Activated CD4-positive, alpha-beta memory T cell treated with anti-CD3 and anti-CD28 coated beads for 36 hours (primary cell): ENCODE measurements at regions of chr12 and their contacts with region 1.

Region 1: GRCh38 chr12:11067514-11067913 is 5.4 kb upstream of the TAS2R46 start:
- DNase-seq: no peak
- H3K4me3 Mint-ChIP-seq: no peak overlapping the region
- H3K27ac Mint-ChIP-seq: no peak overlapping the region
- H3K4me1 Mint-ChIP-seq: peaks cover 4% of the 10 kb centered on the region
- H3K27me3 Mint-ChIP-seq: no peaks in the 10 kb centered on the region

Region 2: GRCh38 chr12:9888665-9889273 is 1178.7 kb before region 1 on chr12:
- CTCF ChIA-PET with region 1: no interaction called
- POLR2A ChIA-PET with region 1: no interaction called
- intact Hi-C with region 1: no loop called
- DNase-seq: no peak
- H3K4me3 Mint-ChIP-seq: no peak overlapping the region
- H3K27ac Mint-ChIP-seq: no peak overlapping the region
- H3K4me1 Mint-ChIP-seq: peaks cover 5% of the 10 kb centered on the region
- H3K27me3 Mint-ChIP-seq: no peaks in the 10 kb centered on the region

Region 3: DNA sequence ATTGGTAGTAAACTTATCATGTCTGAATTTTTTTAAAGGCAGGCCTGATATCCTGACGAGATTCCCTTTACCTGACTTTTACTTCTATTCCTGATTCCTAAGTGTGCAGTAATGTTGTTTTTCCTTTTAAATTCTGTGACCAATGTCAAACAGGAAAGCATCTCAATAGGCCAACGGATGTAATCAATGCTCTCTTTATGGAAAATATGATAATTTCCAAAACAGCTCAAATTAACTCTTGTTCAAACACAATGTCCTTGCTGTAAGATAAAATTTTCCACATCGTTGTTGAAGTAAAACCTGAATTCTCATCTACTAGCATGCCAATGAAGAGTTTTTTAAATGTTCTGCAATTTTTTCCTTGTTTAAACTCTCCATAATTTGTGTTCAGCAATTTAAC is 28.3 kb before region 1 on chr12:
- CTCF ChIA-PET with region 1: no interaction called
- POLR2A ChIA-PET with region 1: no interaction called
- intact Hi-C with region 1: loop called (anchors 1 kb)
- DNase-seq: no peak
- H3K4me3 Mint-ChIP-seq: no peak overlapping the region
- H3K27ac Mint-ChIP-seq: no peak overlapping the region
- H3K4me1 Mint-ChIP-seq: no peaks in the 10 kb centered on the region
- H3K27me3 Mint-ChIP-seq: no peaks in the 10 kb centered on the region